AG04449 (cell line): ENCODE measurements at regions of chr7 and their contacts with region 1.

Region 1: DNA sequence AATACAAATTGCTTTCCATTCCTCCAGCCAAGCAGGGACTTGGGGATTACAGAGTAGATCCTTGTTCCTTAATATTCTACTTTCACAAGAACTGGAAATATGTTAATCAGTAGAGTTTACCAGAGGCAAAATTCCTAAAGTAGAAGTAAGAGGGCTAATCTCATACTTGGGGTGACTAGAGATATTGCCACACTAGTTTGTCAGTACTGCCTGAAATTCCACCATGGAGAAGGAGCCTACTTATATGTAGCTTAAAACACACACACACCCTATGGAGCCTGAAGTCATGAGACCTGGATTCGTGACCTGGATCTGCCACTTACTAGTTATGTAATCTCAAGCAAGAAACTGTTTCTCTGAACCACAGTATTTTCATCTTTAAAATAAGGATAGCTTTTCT is 33.9 kb downstream of the STRIP2 start:
- DNase-seq: peak; percentile 57
- H3K4me3 ChIP-seq: no peak overlapping the region
- CTCF ChIP-seq: no peak

Region 2: DNA sequence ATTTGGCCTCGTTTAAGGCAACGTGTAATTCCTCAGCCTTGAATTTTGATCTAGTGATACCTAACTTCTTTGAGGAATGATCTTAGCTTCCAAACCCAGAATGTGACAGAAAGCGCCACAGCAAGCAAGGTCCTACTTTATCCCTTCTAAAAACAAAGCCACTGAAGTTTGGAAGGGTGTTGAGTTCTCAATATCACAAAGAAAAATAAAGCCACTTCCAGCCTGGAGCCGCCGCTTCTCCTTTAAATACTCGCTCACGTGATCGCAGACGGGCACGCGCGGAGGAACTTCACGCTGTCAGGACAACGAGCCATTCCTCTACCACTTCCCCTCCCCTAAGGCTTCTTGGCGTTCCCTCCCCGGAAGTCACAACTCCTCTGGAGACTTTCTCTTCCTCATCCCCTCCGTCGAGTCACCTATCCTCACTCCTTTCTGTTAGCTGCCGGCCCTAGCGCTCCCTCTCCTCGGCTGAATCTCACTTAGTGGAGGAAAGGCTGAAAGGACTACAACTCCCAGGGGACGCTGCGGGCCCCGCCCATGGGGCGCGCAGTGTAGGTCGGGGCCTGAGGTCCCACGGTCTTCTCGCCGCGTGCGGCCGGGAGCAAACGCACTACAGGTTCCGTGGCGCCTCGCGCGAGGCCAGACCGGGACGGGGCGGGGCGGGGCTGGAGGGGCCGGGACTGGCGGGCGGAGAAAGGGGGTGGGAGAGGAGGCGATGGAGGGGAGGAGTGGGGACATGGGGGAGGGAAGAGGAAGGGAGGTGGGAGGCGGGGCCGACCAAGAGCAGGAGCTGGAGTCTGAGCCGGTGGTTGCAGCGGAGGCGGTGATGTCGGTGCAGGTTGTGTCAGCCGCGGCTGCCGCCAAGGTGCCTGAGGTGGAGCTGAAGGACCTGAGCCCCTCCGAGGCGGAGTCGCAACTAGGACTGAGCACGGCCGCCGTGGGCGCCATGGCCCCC is 243.6 kb before region 1 on chr7 and contains the start of gene AHCYL2:
- CTCF ChIA-PET with region 1: interaction called, 138 read pairs
- POLR2A ChIA-PET with region 1: no interaction called
- DNase-seq: peak; percentile 71
- H3K4me3 ChIP-seq: peak within 1 kb of the TSS; percentile 78
- CTCF ChIP-seq: no peak

Region 3: GRCh38 chr7:129359638-129360037 is 108.4 kb before region 1 on chr7:
- CTCF ChIA-PET with region 1: interaction called, 34 read pairs
- POLR2A ChIA-PET with region 1: no interaction called
- DNase-seq: no peak
- H3K4me3 ChIP-seq: no peak overlapping the region
- CTCF ChIP-seq: no peak

Region 4: DNA sequence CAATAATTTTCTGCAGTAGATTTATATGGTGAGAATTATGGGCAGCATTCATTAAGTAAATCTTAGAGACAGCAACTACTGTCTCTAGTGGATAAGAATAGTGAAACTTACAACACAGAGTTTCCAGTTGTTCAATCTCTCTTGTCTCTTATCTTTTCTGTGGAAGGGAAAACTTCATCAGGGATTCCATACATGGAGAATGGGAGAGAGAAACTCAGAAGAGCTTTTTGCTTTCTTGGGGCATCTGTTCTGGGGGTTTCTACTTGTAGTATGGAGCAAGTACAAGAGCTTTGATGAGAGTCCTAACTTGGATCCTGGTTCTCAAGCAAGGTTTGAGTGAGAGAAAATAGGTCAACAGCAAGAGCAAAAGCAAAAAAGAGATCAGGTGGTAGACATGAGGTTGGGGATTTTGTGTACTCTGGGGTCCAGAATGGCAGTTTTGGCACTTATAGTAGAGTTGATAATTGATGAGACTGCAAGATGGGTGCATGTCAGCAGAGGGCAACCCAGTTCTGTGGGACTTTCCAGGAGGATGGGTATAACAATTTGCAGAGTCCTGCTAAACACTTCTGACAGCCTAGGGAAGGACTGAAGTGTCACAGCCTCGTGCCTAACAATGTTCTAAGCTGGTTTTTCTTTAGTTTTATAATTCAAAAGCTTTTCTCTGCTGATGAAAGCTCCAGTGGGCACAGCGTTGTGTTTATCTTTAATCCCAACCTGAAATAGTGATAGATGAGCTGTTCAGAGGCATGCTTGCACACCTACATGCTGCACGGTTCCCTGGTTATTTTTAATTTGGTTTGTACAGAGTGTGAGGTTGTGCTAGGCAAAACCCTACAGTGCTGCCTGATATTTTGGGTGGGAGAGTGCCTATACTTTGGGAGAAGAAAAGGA is 65.9 kb before region 1 on chr7:
- CTCF ChIA-PET with region 1: interaction called, 14 read pairs
- POLR2A ChIA-PET with region 1: no interaction called
- DNase-seq: no peak
- H3K4me3 ChIP-seq: no peak overlapping the region
- CTCF ChIP-seq: no peak

Region 5: DNA sequence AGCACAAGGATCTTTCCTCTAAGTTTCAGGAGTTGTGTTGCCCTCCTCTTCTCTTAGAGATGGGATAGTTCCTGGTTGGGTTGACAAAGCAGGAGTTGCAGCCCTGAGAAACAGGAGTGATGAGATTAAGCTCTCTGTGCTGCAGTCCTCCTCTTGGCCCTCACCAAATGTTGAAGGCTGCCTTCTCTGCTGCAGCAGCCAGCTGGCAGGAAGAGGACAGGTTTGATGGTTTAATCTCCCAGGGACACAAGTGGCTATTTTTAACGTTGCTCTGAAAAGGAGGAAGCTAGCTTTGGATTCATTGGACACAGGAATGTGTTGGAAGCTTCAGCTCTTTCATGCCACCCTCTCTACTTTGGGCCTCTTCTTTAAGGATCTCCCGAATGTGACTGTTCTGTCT is 24.5 kb before region 1 on chr7:
- CTCF ChIA-PET with region 1: no interaction called
- POLR2A ChIA-PET with region 1: no interaction called
- DNase-seq: no peak
- H3K4me3 ChIP-seq: no peak overlapping the region
- CTCF ChIP-seq: no peak